AG04449 (cell line): ENCODE measurements at regions of chr6 and their contacts with region 1.

Region 1: GRCh38 chr6:32885698-32886286 is 31.8 kb downstream of the PSMB9 start:
- DNase-seq: no peak
- H3K4me3 ChIP-seq: no peak overlapping the region
- CTCF ChIP-seq: peak; percentile 19

Region 2: DNA sequence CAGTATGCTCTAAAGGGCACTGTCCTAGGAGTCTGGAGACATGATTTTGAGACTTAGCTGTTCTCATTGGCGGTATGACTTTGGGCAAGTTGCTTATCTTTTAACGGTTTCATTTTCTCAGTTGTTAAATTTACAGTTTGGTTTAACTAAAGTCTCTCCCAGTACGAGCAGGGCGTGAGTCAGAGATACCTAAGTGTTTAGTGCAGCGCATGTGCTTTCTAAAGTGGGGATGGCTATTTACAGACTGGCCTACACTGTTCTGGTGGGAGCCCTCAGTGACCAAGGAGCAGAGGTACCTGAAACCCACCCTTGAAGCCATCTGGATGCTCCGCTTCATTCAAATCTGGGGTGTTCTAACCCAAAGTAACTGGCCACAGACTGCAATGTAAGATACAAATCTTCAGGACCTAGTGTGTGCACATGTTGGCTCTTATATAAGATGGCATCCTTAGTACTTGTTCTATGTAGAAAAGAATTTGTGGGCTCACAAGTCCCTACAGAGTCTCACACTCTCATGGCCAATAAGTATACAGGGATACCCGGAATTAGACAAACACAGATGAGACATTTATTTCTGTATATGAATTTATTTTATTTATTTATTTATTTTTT is 1135.3 kb before region 1 on chr6:
- CTCF ChIA-PET with region 1: no interaction called
- POLR2A ChIA-PET with region 1: no interaction called
- DNase-seq: no peak
- H3K4me3 ChIP-seq: no peak overlapping the region
- CTCF ChIP-seq: no peak

Region 3: DNA sequence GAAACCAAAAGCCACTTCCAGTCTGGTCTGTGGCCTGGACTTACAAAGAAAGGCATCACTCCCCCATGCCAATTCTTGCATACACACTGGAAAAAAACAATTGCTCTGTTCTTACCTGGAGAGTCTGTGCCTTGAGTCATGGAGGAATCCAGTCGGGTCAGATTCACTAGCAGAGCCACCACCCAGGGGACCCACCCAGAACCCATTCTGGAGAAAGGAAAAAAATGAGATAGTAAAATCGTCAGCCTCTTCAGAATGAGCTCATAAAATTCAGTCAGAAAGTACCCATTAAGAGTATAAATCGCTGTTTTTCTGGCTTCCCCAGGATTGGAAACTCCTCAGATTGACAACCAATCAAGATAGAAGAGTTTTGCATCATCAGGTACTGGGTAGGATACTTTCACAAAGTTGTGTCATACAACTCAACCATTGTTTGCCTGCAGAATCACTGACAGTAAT is 69.0 kb before region 1 on chr6 and contains the start of gene HLA-DOB:
- CTCF ChIA-PET with region 1: no interaction called
- POLR2A ChIA-PET with region 1: no interaction called
- DNase-seq: no peak
- H3K4me3 ChIP-seq: no peak within 1 kb of the TSS
- CTCF ChIP-seq: no peak

Region 4: DNA sequence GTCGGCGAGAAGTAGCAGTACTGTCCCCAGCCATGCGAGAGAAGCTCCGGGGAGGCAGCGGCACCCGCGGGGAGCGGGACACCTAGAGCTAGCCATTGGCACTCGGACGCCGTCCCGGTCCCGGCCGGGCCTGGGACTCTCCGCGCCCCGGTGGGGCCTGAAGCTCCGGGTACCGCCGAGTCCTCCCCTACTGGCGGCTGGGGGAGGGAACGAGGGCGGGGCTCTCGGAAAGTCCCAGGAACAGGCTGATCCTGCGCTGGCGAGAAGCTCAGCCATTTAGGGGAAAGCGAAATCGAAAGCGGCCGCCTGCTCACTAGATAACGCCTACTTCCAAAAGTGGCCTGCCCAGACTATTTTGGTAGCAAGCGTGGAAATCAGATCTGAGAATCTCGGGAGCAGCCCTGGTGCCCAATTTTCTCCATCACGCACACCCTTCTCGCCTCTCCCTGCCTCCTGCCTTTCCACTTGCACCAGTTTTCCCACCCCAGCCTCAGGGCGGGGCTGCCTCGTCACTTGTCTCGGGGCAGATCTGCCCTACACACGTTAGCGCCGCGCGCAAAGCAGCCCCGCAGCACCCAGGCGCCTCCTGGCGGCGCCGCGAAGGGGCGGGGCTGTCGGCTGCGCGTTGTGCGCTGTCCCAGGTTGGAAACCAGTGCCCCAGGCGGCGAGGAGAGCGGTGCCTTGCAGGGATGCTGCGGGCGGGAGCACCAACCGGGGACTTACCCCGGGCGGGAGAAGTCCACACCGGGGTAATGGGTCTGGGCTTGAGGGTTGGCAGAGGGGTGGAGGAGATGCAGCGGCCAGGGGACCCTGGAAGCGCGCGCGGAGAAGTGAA is 32.0 kb before region 1 on chr6 and contains the starts of genes PSMB9 and TAP1:
- CTCF ChIA-PET with region 1: interaction called, 12 read pairs
- POLR2A ChIA-PET with region 1: no interaction called
- DNase-seq: peak; percentile 51
- H3K4me3 ChIP-seq: peak within 1 kb of the TSS; percentile 89
- CTCF ChIP-seq: peak; percentile 87

Region 5: DNA sequence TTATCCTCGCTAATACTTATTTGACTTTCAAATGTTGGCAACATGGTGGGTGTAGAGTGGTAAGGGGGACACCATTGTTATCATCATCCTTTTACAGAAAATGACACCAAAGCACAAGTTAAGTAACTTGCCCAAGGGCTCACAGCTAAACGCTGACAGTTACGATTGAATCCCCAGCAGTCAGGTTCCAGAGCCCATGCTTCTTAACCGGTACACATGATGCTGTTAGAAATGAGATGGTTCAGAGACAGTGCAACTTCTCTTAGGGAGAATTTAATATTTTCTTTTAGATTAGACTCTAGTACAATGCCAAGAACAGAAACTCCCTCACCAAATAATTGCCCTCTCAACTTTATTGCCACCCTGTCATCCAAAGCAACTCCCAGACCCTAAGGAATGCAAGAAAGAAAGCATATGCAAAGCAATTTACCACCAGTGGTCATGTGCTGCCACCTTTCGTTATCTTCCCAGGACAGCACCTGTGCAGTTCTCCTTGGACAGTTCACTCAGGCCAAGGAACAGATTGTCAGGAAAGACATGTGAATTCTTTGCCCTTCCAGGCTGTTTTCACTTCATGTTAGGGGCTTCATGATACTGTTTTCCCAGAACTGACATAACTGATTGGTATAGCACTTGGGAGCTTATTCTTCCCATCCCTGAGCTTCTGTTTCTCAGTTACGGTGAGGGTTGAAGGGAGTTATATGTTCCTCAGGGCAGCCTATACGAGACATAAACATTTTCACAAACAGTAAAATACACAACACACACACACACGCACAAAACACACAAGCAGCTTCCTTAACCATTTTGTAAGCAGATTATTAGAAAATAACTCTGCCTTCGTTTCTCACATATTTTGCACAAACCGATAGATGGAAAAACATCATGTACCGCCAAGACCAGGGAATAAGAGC is 62.0 kb after region 1 on chr6:
- CTCF ChIA-PET with region 1: interaction called, 95 read pairs
- POLR2A ChIA-PET with region 1: no interaction called
- DNase-seq: no peak
- H3K4me3 ChIP-seq: no peak overlapping the region
- CTCF ChIP-seq: peak; percentile 46

Region 6: GRCh38 chr6:32971581-32972352 is 86.0 kb after region 1 on chr6:
- CTCF ChIA-PET with region 1: interaction called, 50 read pairs
- POLR2A ChIA-PET with region 1: interaction called, 18 read pairs
- DNase-seq: peak; percentile 99
- H3K4me3 ChIP-seq: peak overlapping the region; percentile 92
- CTCF ChIP-seq: no peak

Region 7: DNA sequence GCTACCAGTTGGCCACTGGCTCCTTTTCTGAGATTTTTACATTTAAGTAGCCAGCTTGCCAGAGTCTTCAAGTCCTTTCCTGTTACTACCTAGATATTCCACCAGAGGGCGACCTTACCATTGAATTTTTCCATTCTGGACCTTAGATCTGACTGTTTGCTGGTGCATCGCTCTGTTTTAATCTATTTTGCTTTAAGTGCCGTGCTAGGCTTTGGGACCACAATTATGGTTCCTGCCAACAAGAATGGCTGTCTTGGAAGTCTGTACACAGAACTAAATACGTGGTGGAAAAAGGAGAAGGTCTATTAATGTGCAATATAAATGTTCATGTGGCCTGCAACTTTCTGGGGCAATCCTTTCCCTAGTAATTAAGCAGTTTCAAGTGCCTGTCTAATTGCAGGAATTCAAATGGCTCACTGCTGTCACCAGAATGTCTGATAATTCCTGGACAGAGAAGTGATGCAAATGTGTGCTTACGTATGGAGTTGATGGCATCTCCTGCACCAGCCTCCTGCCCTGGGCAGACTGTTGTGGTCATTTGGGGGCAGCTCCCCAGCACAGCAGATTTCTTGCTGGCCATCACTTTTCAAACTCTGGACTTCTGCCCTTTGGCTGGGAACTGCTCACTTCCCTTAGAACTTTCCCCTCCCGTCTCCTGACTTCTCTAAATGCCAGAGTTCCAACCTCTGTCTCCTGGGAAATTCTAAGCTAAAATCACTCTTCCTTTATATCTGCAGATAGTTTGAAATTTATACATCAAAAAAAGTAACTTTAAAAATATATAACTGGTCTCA is 129.2 kb after region 1 on chr6:
- CTCF ChIA-PET with region 1: interaction called, 10 read pairs
- POLR2A ChIA-PET with region 1: no interaction called
- DNase-seq: peak; percentile 55
- H3K4me3 ChIP-seq: no peak overlapping the region
- CTCF ChIP-seq: peak; percentile 61